PC-9 (cell line): ENCODE measurements at regions of chr2 and their contacts with region 1.

Region 1: DNA sequence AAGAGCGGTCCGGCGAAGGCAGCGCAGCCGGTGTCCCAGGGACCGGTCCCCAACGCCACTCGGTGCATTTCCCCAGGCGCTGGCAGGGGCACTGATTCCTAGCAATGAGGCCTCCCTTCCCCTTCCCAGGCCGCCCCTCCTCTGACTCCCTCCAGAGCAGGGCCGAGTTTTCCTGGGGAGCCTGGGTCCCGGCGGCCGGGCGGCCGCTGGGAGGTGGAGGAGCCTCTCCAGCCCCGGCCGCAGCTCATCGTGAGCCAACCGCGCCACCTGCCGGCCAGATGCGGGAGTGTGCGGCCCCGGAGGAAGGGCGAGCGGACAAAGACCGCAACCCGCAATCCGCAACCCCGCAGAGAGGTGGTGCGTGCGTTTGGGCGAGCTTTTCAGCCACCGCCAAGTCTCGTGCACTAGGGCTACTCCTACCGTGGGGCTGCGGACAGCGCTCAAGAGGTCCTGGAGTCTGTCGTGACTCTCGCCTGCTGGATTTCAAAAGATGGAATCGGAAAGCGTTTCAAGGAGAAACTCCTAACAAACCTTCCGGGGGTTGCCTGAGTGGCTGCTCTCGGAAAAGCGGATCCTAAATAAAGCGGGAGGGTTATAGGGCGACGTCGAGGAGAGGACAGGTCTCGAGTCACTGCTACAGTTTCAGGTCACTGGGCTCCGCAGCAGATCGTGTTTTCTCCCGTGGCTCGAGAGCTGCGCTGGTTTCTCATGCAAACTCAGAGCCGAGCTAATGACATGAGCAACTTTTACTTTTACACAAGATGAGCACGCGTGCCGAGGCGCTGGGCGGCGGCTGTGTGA is 1.5 kb upstream of the EPHA4 start:
- DNase-seq: peak; percentile 79 to 96
- H3K4me3 ChIP-seq: peak overlapping the region; percentile 87
- H3K27ac ChIP-seq: peak overlapping the region; percentile 51; the same call in 1 of the 2 replicates
- H3K4me1 ChIP-seq: peaks cover 15% of the 10 kb centered on the region
- H3K27me3 ChIP-seq: no peaks in the 10 kb centered on the region
- CTCF ChIP-seq: peak; percentile 100

Region 2: DNA sequence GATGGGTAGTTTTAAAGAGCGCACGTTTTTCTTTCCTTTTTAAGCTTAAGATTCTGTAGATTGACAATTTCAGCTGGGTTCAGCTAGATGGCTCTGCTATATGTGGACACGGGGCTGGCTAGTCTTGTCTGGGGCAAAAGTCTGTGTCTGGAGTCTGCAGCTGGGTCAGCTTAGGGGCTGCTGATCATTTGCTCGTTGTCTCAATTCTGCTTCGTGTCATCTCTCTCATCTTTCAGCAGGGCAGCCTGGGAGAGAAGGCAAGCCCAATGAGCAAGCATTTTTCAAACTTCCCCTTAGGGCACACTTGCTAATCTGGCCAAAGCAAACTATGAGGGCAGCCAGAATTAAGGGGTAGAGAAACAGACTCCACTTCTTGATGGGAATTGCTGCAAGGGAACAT is 1483.6 kb before region 1 on chr2:
- CTCF ChIA-PET with region 1: no interaction called
- POLR2A ChIA-PET with region 1: no interaction called
- intact Hi-C with region 1: loop called (anchors 10 kb)
- DNase-seq: no peak
- H3K4me3 ChIP-seq: no peak overlapping the region
- H3K27ac ChIP-seq: no peak overlapping the region
- H3K4me1 ChIP-seq: peaks cover 12% of the 10 kb centered on the region
- H3K27me3 ChIP-seq: no peaks in the 10 kb centered on the region
- CTCF ChIP-seq: no peak

Region 3: GRCh38 chr2:220687231-220687843 is 886.3 kb before region 1 on chr2:
- CTCF ChIA-PET with region 1: no interaction called
- POLR2A ChIA-PET with region 1: no interaction called
- intact Hi-C with region 1: loop called (anchors 1 kb)
- DNase-seq: peak in 1 of 2 experiments; percentile 47
- H3K4me3 ChIP-seq: no peak overlapping the region
- H3K27ac ChIP-seq: no peak overlapping the region
- H3K4me1 ChIP-seq: peaks cover 9% of the 10 kb centered on the region; the same call in 1 of the 2 replicates
- H3K27me3 ChIP-seq: no peaks in the 10 kb centered on the region
- CTCF ChIP-seq: peak; percentile 84

Region 4: GRCh38 chr2:221372159-221372884 is 201.3 kb before region 1 on chr2:
- CTCF ChIA-PET with region 1: interaction called, 3 read pairs
- POLR2A ChIA-PET with region 1: interaction called, 3 read pairs
- intact Hi-C with region 1: loop called (anchors 5 kb)
- DNase-seq: no peak
- H3K4me3 ChIP-seq: no peak overlapping the region
- H3K27ac ChIP-seq: no peak overlapping the region
- H3K4me1 ChIP-seq: no peaks in the 10 kb centered on the region
- H3K27me3 ChIP-seq: no peaks in the 10 kb centered on the region
- CTCF ChIP-seq: peak; percentile 77

Region 5: GRCh38 chr2:221494560-221494959 is 79.1 kb before region 1 on chr2:
- CTCF ChIA-PET with region 1: no interaction called
- POLR2A ChIA-PET with region 1: no interaction called
- intact Hi-C with region 1: no loop called
- DNase-seq: peak; percentile 60 to 68
- H3K4me3 ChIP-seq: no peak overlapping the region
- H3K27ac ChIP-seq: no peak overlapping the region
- H3K4me1 ChIP-seq: peaks cover 7% of the 10 kb centered on the region
- H3K27me3 ChIP-seq: no peaks in the 10 kb centered on the region
- CTCF ChIP-seq: no peak

Region 6: GRCh38 chr2:221517696-221518151 is 55.9 kb before region 1 on chr2:
- CTCF ChIA-PET with region 1: no interaction called
- POLR2A ChIA-PET with region 1: no interaction called
- intact Hi-C with region 1: loop called (anchors 1 kb)
- DNase-seq: peak; percentile 94 to 100
- H3K4me3 ChIP-seq: 0 out of 2 replicates have a peak overlapping the region, but pooled peaks have one; percentile 6
- H3K27ac ChIP-seq: peak overlapping the region; percentile 58
- H3K4me1 ChIP-seq: peaks cover 64% of the 10 kb centered on the region
- H3K27me3 ChIP-seq: no peaks in the 10 kb centered on the region
- CTCF ChIP-seq: no peak

Region 7: GRCh38 chr2:221606424-221606823 is 32.8 kb after region 1 on chr2:
- CTCF ChIA-PET with region 1: no interaction called
- POLR2A ChIA-PET with region 1: no interaction called
- intact Hi-C with region 1: no loop called
- DNase-seq: no peak
- H3K4me3 ChIP-seq: no peak overlapping the region
- H3K27ac ChIP-seq: no peak overlapping the region
- H3K4me1 ChIP-seq: no peaks in the 10 kb centered on the region
- H3K27me3 ChIP-seq: no peaks in the 10 kb centered on the region
- CTCF ChIP-seq: no peak

Region 8: GRCh38 chr2:221792971-221793521 is 219.4 kb after region 1 on chr2:
- CTCF ChIA-PET with region 1: interaction called, 3 read pairs
- POLR2A ChIA-PET with region 1: no interaction called
- intact Hi-C with region 1: loop called (anchors 1 kb)
- DNase-seq: no peak
- H3K4me3 ChIP-seq: 0 out of 2 replicates have a peak overlapping the region, but pooled peaks have one; percentile 18
- H3K27ac ChIP-seq: peak overlapping the region; percentile 86
- H3K4me1 ChIP-seq: peaks cover 50% of the 10 kb centered on the region
- H3K27me3 ChIP-seq: no peaks in the 10 kb centered on the region
- CTCF ChIP-seq: no peak